ENCODE measurements at regions of chr2 and their contacts with region 1.

Region 1: DNA sequence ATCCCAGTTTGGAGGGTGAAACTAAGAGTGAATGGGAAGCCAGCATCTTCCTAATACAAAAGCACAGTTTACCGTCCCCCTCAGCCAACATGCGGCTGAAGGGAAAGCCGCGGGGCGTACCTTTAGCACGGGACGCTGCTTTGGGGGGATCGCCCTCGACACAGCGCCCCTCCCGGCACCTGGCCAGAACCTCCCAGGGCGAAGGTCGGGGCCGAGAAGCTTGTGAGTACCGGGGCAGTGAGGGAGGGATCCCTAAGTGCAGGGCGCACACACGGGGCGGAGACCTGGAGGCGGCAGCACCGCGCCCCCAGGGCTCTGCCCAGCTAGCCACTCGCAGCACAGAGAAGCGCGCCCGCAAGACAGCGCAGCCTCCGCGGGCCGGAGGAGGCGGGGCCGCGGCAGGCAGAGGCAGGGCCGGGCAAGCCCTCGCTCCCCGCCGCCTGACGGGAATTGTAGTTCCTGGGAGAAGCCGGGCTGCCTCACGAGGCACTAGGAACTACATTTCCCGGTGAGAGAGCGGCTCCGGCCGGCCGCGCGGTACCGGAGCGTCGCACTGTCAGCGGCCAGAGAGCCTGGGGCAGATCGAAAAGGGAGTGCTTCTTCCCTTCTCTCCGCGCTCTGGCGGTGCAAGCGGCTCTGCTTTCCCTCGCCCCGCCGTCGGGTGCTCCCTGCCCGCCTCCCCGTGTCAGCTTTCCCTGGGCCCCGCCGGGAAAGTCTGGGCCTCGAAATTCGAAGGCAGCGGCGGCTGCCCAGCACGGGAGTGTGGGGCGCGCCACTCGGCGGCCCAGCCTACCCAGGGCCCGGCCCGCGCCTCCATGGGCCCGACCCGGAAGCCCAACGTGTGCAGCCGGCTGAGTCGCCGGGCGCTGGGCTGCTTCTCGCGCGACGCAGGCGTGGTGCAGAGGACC is at the starts of genes DCAF17 and METTL8:
- H3K4me3 Mint-ChIP-seq: peak within 1 kb of the TSS; percentile 86
- H3K27ac Mint-ChIP-seq: peak within 1 kb of the TSS; percentile 93
- H3K4me1 Mint-ChIP-seq: peaks cover 16% of the 10 kb centered on the region
- H3K27me3 Mint-ChIP-seq: no peaks in the 10 kb centered on the region

Region 2: GRCh38 chr2:170928824-170929685 is 505.0 kb before region 1 on chr2 and contains the start of gene GORASP2:
- intact Hi-C with region 1: loop called (anchors 1 kb)
- H3K4me3 Mint-ChIP-seq: peak within 1 kb of the TSS; percentile 89
- H3K27ac Mint-ChIP-seq: peak within 1 kb of the TSS; percentile 91
- H3K4me1 Mint-ChIP-seq: peaks cover 31% of the 10 kb centered on the region
- H3K27me3 Mint-ChIP-seq: no peaks in the 10 kb centered on the region

Region 3: GRCh38 chr2:170973492-170974303 is 460.3 kb before region 1 on chr2:
- intact Hi-C with region 1: loop called (anchors 5 kb)
- H3K4me3 Mint-ChIP-seq: peak overlapping the region; percentile 74
- H3K27ac Mint-ChIP-seq: peak overlapping the region; percentile 41
- H3K4me1 Mint-ChIP-seq: peaks cover 14% of the 10 kb centered on the region
- H3K27me3 Mint-ChIP-seq: peaks cover 22% of the 10 kb centered on the region

Region 4: GRCh38 chr2:171522052-171522787 is 88.2 kb after region 1 on chr2 and contains the start of gene CYBRD1:
- intact Hi-C with region 1: loop called (anchors 2 kb)
- H3K4me3 Mint-ChIP-seq: peak within 1 kb of the TSS; percentile 84
- H3K27ac Mint-ChIP-seq: peak within 1 kb of the TSS; percentile 85
- H3K4me1 Mint-ChIP-seq: peaks cover 29% of the 10 kb centered on the region
- H3K27me3 Mint-ChIP-seq: no peaks in the 10 kb centered on the region

Measured in dendritic cell treated with granulocyte-macrophage colony-stimulating factor and Interleukin-4, amounts not matched to agents 40 ng/mL and 50 ng/mL, for 4 days (primary cell).